Thyroid gland (tissue), 4 donors: ENCODE measurements at regions of chr1 and their contacts with region 1.

Region 1: GRCh38 chr1:110102081-110102480 is 10.2 kb upstream of the UBL4B start:
- DNase-seq: no peak
- H3K4me3 ChIP-seq: no peak overlapping the region
- H3K27ac ChIP-seq: no peak overlapping the region
- H3K4me1 ChIP-seq: no peaks in the 10 kb centered on the region
- H3K27me3 ChIP-seq: no peaks in the 10 kb centered on the region
- CTCF ChIP-seq: no peak
- POLR2A ChIP-seq: no peak

Region 2: DNA sequence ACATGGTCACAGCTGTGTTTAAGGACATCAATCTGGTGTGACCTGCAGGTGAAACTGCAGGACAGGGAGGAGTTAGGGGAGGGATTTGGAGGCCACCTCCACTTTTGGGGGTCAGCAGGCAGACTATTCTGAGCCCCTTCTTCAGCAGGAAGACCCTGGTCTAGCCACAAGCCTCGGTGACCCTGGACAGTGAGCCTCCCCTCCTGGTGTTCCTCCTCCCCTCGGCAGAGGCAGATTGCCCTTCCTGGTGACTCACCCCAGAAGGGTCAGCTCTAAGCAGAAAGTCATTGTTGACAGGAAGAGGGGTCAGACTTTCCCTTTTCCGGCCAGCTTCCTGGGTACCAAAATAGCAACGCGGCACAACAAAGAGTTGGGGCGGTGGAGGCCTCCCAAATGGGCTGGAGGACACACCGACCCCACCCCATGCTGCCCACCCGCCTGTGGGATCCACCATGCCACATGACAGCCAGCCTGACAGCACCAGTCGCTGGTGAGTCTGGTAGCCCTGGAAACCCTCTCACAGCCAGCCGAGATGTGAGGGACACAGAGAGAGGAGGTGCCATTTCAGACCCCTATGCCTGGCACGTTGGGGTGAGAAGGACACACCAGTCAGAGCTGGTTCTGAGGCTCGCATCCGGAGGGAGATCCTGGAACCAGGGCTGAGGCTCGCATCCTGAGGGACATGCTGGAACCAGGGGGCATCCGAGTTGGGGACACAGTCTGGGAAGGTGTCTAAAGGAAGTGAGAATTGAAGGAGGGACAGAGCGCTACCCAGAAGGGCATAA is 206.2 kb before region 1 on chr1:
- intact Hi-C with region 1: no loop called
- DNase-seq: no peak
- H3K4me3 ChIP-seq: no peak overlapping the region
- H3K27ac ChIP-seq: peak overlapping the region in 1 of 3 donors; percentile 14
- H3K4me1 ChIP-seq: peaks cover 0 to 21% of the 10 kb centered on the region in 2 donors
- H3K27me3 ChIP-seq: no peaks in the 10 kb centered on the region
- CTCF ChIP-seq: no peak
- POLR2A ChIP-seq: no peak

Region 3: DNA sequence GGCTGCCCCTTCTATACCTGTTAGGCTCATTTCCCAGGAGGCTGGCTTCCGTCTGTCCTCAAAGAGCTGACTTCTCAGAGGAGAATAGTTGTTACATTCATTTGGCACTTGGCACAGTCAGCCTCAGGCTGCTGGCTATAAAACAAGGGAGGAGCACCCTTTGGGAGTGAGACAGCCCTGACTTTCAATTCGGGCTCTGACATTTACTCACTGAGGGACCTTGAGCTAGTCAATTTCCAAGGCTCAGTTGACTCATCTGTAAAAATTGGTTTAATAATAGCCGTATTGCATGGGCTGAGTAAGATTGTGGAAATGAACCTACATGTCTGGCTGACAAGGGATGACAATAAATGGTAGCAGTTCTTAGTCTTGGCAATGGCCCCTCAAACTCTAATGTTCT is 45.3 kb before region 1 on chr1:
- intact Hi-C with region 1: loop called (anchors 5 kb)
- DNase-seq: no peak
- H3K4me3 ChIP-seq: no peak overlapping the region
- H3K27ac ChIP-seq: no peak overlapping the region
- H3K4me1 ChIP-seq: no peaks in the 10 kb centered on the region
- H3K27me3 ChIP-seq: no peaks in the 10 kb centered on the region
- CTCF ChIP-seq: no peak
- POLR2A ChIP-seq: no peak